ENCODE measurements at regions of chr1 and their contacts with region 1.

Region 1: DNA sequence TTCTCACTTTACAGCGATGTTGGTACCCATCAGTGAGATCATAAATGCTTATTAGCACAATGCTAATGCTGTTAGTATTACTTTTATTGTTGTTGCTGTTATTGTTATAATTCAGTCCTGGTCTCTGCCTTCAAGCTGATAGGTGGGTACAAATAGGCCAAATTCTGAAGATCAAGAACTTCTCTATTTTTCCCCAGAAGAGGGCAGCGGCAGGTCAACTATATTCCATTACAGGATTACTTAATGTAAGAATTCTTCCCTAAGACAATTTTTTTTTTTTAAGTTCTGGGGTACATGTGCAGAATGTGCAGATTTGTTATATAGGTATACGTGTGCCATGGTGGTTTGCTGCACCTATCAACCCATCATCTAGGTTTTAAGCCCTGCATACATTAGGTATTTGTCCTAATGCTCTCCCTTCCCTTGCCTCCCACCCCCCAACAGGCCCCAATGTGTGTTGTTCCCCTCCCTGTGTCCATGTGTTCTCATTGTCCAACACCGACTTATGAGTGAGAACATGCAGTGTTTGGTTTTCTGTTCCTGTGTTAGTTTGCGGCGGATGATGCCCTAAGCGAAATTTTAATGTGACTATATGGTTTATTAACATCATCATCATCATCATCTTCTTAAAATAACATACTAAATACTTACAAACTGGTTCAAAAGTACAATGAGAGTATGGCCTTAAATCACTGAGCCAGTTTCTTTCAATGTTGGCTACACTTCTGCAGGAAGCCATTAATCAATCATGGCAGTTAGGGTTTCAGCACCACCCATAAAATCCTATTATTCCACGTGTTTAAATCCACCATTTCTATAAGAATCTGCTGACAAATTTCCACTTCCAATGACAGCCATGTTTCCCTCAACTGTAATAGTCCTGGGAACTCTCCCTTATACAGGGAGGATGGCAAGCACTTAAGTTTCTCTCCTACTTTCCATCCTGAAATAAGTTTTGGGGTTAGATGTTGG is 19.2 kb downstream of the SLC19A2 start:
- DNase-seq: no peak

Region 2: DNA sequence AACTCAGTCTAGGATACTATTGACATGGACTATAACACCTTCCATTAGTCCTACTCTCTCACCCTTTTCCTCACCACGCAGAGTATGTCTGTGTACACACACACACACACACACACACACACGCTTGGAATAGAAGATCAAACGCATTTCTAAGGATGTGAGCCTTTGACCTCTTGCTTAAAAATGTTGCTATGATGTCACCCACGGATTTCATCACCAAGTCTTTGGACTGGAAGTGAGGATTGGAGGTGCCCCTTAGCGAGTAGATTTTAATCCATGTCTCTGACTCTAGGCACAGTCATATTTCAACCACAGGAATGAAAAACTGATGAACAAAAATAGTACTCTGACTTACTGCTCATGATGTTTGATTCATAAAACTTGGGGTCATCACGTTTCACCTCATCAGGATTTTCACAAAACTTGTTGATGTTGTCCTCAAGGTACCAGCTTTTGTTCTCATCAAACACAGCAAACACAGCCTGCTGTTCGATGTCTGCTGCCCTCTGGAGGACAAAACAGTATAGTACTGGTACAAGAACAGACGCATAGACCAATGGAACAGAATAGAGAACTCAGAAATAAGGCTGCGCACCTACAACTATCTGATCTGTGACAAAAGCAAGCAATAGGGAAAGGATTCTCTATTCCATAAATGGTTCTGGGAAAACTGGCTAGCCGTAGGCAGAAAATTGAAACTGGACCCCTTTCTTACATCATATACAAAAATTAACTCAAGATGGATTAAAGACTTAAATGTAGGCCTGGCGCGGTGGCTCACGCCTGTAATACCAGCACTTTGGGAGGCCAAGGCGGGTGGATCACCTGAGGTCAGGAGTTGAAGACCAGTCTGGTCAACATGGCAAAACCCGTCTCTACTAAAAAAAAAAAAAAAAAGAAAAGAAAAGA is 79.8 kb after region 1 on chr1:
- intact Hi-C with region 1: loop called (anchors 5 kb)
- DNase-seq: no peak

Region 3: DNA sequence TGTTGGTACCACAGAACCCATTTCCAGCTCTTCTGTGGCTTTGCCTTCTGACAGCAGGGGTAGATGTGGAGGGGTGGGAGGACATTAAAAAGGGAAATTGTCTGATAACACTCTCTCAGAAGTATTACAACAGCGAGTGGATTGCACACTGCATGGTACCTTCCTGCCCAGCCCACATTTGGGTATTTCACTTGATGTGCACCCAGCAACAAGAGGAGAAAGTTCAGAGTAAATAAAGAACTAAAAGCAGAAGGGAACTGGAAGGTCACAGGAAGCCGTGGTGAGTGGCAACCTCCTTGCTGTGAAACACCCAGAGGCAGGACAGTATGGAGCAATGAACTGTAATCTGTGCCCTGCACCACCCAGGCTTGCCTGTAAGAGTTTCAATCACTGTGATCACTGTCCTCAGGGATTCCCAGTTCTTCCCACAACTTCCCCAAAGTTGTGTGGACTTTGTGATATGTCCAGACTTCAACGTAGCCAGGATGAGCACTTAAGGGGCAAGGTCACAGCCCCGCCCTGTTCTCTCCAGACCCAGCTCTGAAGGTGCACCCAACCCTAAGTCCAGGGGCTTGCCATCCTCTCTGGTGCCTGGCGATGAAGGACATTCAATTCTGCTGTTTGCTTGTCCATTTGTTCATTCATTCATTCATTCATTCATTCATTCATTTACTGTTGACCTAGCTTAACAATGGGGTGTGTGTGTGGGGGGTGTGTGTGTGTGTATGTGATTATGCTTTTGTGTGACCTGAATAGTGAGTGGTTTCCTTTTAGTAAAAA is 138.4 kb after region 1 on chr1:
- intact Hi-C with region 1: no loop called
- DNase-seq: peak; percentile 86

Measured in cardiac septum (tissue), 1 donor.